SK-N-SH (cell line): ENCODE measurements at regions of chr1 and their contacts with region 1.

Region 1: GRCh38 chr1:182084487-182085316 is 23.2 kb upstream of the ZNF648 start:
- DNase-seq: peak; percentile 81
- H3K4me3 ChIP-seq: peak overlapping the region in 1 of 2 experiments; percentile 40; a peak in 1 of 4 replicates
- H3K27ac ChIP-seq: no peak overlapping the region
- H3K4me1 ChIP-seq: no peaks in the 10 kb centered on the region; a peak in 1 of 4 replicates
- H3K27me3 ChIP-seq: no peaks in the 10 kb centered on the region
- CTCF ChIP-seq: peak; percentile 56
- EP300 ChIP-seq: no peak
- RAD21 ChIP-seq: peak; percentile 84

Region 2: GRCh38 chr1:181936768-181937581 is 147.7 kb before region 1 on chr1:
- CTCF ChIA-PET with region 1: no interaction called
- POLR2A ChIA-PET with region 1: no interaction called
- DNase-seq: peak; percentile 47
- H3K4me3 ChIP-seq: no peak overlapping the region; a peak in 1 of 4 replicates
- H3K27ac ChIP-seq: no peak overlapping the region
- H3K4me1 ChIP-seq: no peaks in the 10 kb centered on the region
- H3K27me3 ChIP-seq: no peaks in the 10 kb centered on the region
- CTCF ChIP-seq: 0 out of 2 replicates have a peak, but pooled peaks have one; percentile 19
- EP300 ChIP-seq: no peak
- RAD21 ChIP-seq: peak; percentile 62

Region 3: DNA sequence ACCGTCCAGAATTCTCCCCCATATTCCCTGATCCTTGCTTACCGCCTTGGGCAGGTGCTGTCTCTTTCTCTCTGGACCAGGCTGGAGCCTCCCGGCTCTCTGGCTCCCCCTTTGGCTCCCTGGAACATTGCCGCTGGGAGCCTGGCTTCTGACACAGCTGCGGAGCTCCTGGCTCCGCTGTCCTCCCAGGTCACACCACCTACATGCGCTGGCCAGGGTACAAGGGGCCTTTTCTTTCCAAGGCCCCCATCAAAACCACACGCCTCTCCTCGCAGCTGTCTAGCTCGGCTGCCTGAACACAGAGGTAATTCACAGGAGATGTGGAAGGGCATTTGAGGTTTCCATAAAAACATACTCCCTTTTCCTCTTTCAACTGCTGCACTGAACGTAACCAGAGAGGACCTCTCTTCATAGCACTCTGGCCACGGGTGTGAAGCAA is 15.7 kb before region 1 on chr1:
- CTCF ChIA-PET with region 1: interaction called, 65 read pairs
- POLR2A ChIA-PET with region 1: no interaction called
- DNase-seq: peak; percentile 84
- H3K4me3 ChIP-seq: no peak overlapping the region
- H3K27ac ChIP-seq: no peak overlapping the region
- H3K4me1 ChIP-seq: no peaks in the 10 kb centered on the region; a peak in 1 of 4 replicates
- H3K27me3 ChIP-seq: no peaks in the 10 kb centered on the region
- CTCF ChIP-seq: peak; percentile 41
- EP300 ChIP-seq: no peak
- RAD21 ChIP-seq: peak; percentile 49

Region 4: GRCh38 chr1:182095965-182096364 is 11.3 kb after region 1 on chr1:
- CTCF ChIA-PET with region 1: interaction called, 13 read pairs
- POLR2A ChIA-PET with region 1: no interaction called
- DNase-seq: no peak
- H3K4me3 ChIP-seq: no peak overlapping the region
- H3K27ac ChIP-seq: no peak overlapping the region
- H3K4me1 ChIP-seq: no peaks in the 10 kb centered on the region
- H3K27me3 ChIP-seq: no peaks in the 10 kb centered on the region
- CTCF ChIP-seq: no peak
- EP300 ChIP-seq: no peak
- RAD21 ChIP-seq: no peak

Region 5: GRCh38 chr1:182391362-182392044 is 306.8 kb after region 1 on chr1 and contains the start of gene GLUL:
- CTCF ChIA-PET with region 1: interaction called, 70 read pairs
- POLR2A ChIA-PET with region 1: no interaction called
- DNase-seq: peak; percentile 98
- H3K4me3 ChIP-seq: peak within 1 kb of the TSS; percentile 95 to 99
- H3K27ac ChIP-seq: peak within 1 kb of the TSS; percentile 84 to 95
- H3K4me1 ChIP-seq: peaks cover 0 to 11% of the 10 kb centered on the region in 2 experiments; a peak in 3 of 4 replicates
- H3K27me3 ChIP-seq: no peaks in the 10 kb centered on the region
- CTCF ChIP-seq: no peak
- EP300 ChIP-seq: no peak
- RAD21 ChIP-seq: no peak
- polyA plus RNA-seq, gene GLUL: 107 TPM in 2 replicates